Right ventricle myocardium superior (tissue), 1 donor: ENCODE measurements at regions of chr3 and their contacts with region 1.

Region 1: DNA sequence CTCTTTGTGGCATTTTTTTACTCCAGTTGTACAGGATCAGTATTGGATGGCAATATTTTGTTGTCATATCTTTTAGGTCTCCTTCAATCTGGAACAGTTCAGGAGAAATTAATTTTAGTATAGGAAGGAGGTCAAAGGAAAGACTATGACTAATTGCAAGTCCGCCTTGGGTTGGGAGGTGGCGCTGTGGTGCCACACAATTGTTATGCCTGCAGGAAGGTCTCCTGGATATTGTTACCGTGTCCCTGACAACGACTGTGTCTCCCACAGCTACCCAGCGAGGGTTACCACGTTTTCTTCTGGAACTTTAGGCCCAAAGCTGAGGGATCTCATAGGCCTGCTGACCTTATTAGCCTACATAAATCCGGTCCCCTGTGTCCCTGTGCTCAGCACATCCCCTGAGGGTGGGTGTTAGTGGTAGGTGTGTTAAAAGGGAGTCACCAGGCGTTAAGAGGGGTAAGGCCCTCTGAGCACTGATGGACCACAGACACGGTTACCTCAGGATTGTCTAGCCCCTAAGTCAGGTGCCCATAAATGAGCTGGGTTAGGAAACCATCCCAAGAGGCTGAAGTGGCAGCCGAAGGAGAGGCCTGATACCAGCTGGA is 31.5 kb downstream of the KCNAB1 start:
- DNase-seq: peak; percentile 79
- ATAC-seq: peak; percentile 81

Region 2: GRCh38 chr3:156509189-156510174 is 357.6 kb after region 1 on chr3:
- intact Hi-C with region 1: loop called (anchors 2 kb)
- DNase-seq: no peak
- ATAC-seq: peak; percentile 80

Region 3: GRCh38 chr3:157081681-157082210 is 929.8 kb after region 1 on chr3:
- intact Hi-C with region 1: loop called (anchors 5 kb)
- DNase-seq: peak; percentile 94
- ATAC-seq: peak; percentile 83